Psoas muscle (tissue), 8 donors: ENCODE measurements at regions of chr3 and their contacts with region 1.

Region 1: DNA sequence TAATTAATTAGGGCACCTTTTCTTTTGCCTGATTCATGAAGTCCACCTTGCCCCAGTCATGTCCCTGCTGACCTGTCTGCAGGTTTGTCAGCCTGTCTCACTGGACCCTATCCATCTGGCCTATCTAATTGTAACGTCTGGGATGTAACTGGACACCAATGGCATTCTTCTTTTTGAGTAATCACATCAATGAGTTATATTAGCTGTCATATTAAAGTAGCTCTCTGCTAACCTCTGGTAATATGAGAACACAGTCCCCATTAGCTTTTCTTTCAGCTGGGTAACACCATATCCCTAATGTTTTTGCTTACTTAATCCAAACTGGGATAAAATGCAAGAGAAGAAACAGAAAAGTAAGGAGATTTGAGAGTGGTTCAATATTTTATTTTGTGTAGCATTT is 166.2 kb upstream of the VEPH1 start:
- DNase-seq: no peak
- ATAC-seq: peak in 3 of 4 donors; percentile 67 to 75 (median 73)
- H3K4me3 ChIP-seq: no peak overlapping the region
- H3K27ac ChIP-seq: no peak overlapping the region
- H3K4me1 ChIP-seq: no peaks in the 10 kb centered on the region
- H3K27me3 ChIP-seq: no peaks in the 10 kb centered on the region
- CTCF ChIP-seq: no peak

Region 2: GRCh38 chr3:157652366-157652765 is 17.1 kb before region 1 on chr3:
- intact Hi-C with region 1: loop called in 1 of 2 experiments (anchors 1 kb)
- DNase-seq: no peak
- ATAC-seq: no peak
- H3K4me3 ChIP-seq: no peak overlapping the region
- H3K27ac ChIP-seq: no peak overlapping the region
- H3K4me1 ChIP-seq: peaks cover 6% of the 10 kb centered on the region
- H3K27me3 ChIP-seq: no peaks in the 10 kb centered on the region
- CTCF ChIP-seq: no peak

Region 3: DNA sequence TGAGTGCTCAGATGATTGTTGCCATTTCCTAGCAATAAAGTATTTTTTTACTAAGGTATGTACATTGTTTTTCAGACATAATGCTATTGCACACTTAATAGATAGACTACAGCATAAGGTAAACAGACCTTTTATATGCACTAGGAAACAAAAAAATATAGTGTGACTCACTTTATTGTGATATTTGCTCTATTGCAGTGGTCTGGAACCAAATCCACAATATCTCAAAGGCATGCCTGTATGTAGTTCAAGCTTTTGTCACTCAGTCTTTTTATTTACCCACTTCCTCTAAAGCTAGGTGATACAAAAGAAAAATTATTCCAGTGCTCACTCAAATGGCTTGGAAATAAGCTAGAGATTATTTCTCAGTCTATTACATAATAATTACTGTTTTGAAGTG is 43.7 kb after region 1 on chr3:
- intact Hi-C with region 1: no loop called
- DNase-seq: no peak
- ATAC-seq: no peak
- H3K4me3 ChIP-seq: no peak overlapping the region
- H3K27ac ChIP-seq: no peak overlapping the region
- H3K4me1 ChIP-seq: no peaks in the 10 kb centered on the region
- H3K27me3 ChIP-seq: no peaks in the 10 kb centered on the region
- CTCF ChIP-seq: no peak